Prostate gland (tissue), 2 donors: ENCODE measurements at regions of chr3 and their contacts with region 1.

Region 1: GRCh38 chr3:152298393-152299242 is 29.9 kb downstream of the MBNL1 start:
- DNase-seq: peak; percentile 56
- H3K4me3 ChIP-seq: peak overlapping the region; percentile 19 to 20
- H3K27ac ChIP-seq: peak overlapping the region; percentile 64 to 72
- H3K4me1 ChIP-seq: no peaks in the 10 kb centered on the region
- H3K27me3 ChIP-seq: no peaks in the 10 kb centered on the region
- CTCF ChIP-seq: no peak
- POLR2A ChIP-seq: no peak

Region 2: GRCh38 chr3:152382312-152383135 is 83.9 kb after region 1 on chr3:
- intact Hi-C with region 1: loop called (anchors 10 kb)
- DNase-seq: no peak
- H3K4me3 ChIP-seq: peak overlapping the region; percentile 11 to 12
- H3K27ac ChIP-seq: peak overlapping the region; percentile 41 to 56
- H3K4me1 ChIP-seq: peaks cover 11% of the 10 kb centered on the region
- H3K27me3 ChIP-seq: no peaks in the 10 kb centered on the region
- CTCF ChIP-seq: no peak
- POLR2A ChIP-seq: no peak